ENCODE measurements at regions of chr2 and their contacts with region 1.

Region 1: DNA sequence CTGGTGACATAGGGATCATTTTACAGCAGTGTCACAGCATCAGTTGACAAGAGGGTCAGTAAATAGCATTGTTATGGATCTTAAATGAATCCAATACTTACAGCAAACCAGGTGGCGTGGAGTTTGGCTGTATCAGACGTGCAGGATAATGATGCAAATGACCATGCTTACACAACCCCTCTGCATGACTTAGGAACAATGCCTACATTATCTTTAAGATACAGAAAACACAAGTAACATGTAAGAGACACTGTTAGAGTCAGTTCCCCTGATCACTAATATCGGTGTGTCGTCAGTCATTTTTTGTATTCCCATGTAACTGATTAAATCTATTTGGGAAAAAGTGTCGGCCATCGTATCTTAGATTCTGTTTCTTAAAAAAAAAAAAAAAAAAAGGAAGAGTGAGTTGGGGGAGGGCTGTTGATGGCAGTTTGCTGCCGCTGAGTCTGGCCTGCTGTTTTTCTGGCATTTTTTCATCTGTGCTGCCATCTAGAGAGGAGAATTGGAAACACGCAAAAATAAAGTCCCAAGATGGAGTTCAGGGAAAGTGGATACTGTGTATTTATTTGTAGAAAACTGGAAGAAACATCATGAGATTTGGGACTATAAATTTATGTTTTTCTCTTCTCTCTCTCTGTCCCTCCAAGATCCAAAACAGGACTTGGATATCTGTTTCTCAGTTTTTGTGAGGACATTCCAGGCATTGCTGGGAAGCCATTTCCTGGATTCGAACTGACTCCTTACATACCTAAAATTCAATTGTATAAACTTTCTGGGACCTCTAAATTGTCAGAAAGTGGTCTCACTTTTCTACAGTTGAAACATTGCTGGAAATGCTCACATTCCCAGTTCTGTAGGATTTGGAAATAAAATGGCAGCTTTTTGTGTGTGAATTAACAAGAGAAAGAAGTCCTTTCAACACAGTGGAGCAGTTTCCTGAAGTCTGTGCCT is 60.3 kb upstream of the AGPS start:
- DNase-seq: peak; percentile 82
- ATAC-seq: peak; percentile 85
- H3K4me3 ChIP-seq: no peak overlapping the region
- H3K4me3 Mint-ChIP-seq: no peak overlapping the region
- H3K27ac ChIP-seq: no peak overlapping the region
- H3K27ac Mint-ChIP-seq: no peak overlapping the region
- H3K4me1 ChIP-seq: peaks cover 4 to 5% of the 10 kb centered on the region in 2 donors
- H3K4me1 Mint-ChIP-seq: peaks cover 8% of the 10 kb centered on the region
- H3K27me3 ChIP-seq: no peaks in the 10 kb centered on the region
- H3K27me3 Mint-ChIP-seq: no peaks in the 10 kb centered on the region
- CTCF ChIP-seq: peak; percentile 77

Region 2: GRCh38 chr2:177148477-177149154 is 183.7 kb before region 1 on chr2:
- CTCF ChIA-PET with region 1: interaction called, 7 read pairs
- POLR2A ChIA-PET with region 1: no interaction called
- intact Hi-C with region 1: loop called (anchors 1 kb)
- DNase-seq: peak; percentile 85
- ATAC-seq: peak; percentile 92
- H3K4me3 ChIP-seq: peak overlapping the region; percentile 42 to 94 (median 67)
- H3K4me3 Mint-ChIP-seq: peak overlapping the region; percentile 92
- H3K27ac ChIP-seq: no peak overlapping the region
- H3K27ac Mint-ChIP-seq: peak overlapping the region; percentile 2
- H3K4me1 ChIP-seq: peaks cover 9 to 13% of the 10 kb centered on the region in 2 donors
- H3K4me1 Mint-ChIP-seq: peaks cover 11% of the 10 kb centered on the region
- H3K27me3 ChIP-seq: peaks cover 0 to 13% (median 10%) of the 10 kb centered on the region in 4 experiments
- H3K27me3 Mint-ChIP-seq: peaks cover 36% of the 10 kb centered on the region
- CTCF ChIP-seq: peak; percentile 99

Region 3: GRCh38 chr2:177296040-177296439 is 36.3 kb before region 1 on chr2:
- CTCF ChIA-PET with region 1: interaction called, 5 read pairs
- POLR2A ChIA-PET with region 1: no interaction called
- intact Hi-C with region 1: loop called (anchors 5 kb)
- DNase-seq: peak; percentile 66
- ATAC-seq: peak; percentile 45
- H3K4me3 ChIP-seq: no peak overlapping the region
- H3K4me3 Mint-ChIP-seq: no peak overlapping the region
- H3K27ac ChIP-seq: no peak overlapping the region
- H3K27ac Mint-ChIP-seq: no peak overlapping the region
- H3K4me1 ChIP-seq: peaks cover 0 to 2% of the 10 kb centered on the region in 2 donors
- H3K4me1 Mint-ChIP-seq: peaks cover 4% of the 10 kb centered on the region
- H3K27me3 ChIP-seq: no peaks in the 10 kb centered on the region
- H3K27me3 Mint-ChIP-seq: no peaks in the 10 kb centered on the region
- CTCF ChIP-seq: peak; percentile 69

Region 4: GRCh38 chr2:177353187-177353478 is 20.8 kb after region 1 on chr2:
- CTCF ChIA-PET with region 1: interaction called, 14 read pairs
- POLR2A ChIA-PET with region 1: no interaction called
- intact Hi-C with region 1: no loop called
- DNase-seq: no peak
- ATAC-seq: no peak
- H3K4me3 ChIP-seq: no peak overlapping the region
- H3K4me3 Mint-ChIP-seq: no peak overlapping the region
- H3K27ac ChIP-seq: no peak overlapping the region
- H3K27ac Mint-ChIP-seq: no peak overlapping the region
- H3K4me1 ChIP-seq: no peaks in the 10 kb centered on the region
- H3K4me1 Mint-ChIP-seq: peaks cover 13% of the 10 kb centered on the region
- H3K27me3 ChIP-seq: no peaks in the 10 kb centered on the region
- H3K27me3 Mint-ChIP-seq: peaks cover 4% of the 10 kb centered on the region
- CTCF ChIP-seq: no peak

Region 5: DNA sequence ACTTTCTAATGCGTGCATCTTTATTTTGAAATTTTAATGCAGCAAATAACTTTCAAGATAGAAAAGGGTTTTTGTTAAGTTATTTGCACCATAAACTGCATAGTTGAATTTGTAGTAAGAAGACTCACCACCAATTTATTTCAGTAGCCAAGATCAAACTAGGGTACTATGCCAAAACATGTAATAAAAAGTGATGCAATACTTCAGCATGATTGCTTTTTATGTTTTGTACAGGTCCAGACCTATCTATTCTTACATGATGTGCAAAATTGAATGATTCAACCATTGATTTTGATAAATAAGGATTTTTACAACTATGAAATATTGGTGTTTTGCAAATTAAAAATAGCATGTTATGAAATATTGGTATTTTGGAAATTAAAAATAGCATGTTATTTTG is 87.0 kb after region 1 on chr2:
- CTCF ChIA-PET with region 1: interaction called, 121 read pairs
- POLR2A ChIA-PET with region 1: no interaction called
- intact Hi-C with region 1: loop called (anchors 1 kb)
- DNase-seq: no peak
- ATAC-seq: no peak
- H3K4me3 ChIP-seq: no peak overlapping the region
- H3K4me3 Mint-ChIP-seq: no peak overlapping the region
- H3K27ac ChIP-seq: no peak overlapping the region
- H3K27ac Mint-ChIP-seq: no peak overlapping the region
- H3K4me1 ChIP-seq: no peaks in the 10 kb centered on the region
- H3K4me1 Mint-ChIP-seq: peaks cover 2% of the 10 kb centered on the region
- H3K27me3 ChIP-seq: no peaks in the 10 kb centered on the region
- H3K27me3 Mint-ChIP-seq: no peaks in the 10 kb centered on the region
- CTCF ChIP-seq: no peak

Region 6: GRCh38 chr2:177552422-177553175 is 220.3 kb after region 1 on chr2:
- CTCF ChIA-PET with region 1: interaction called, 3 read pairs
- POLR2A ChIA-PET with region 1: no interaction called
- intact Hi-C with region 1: loop called (anchors 5 kb)
- DNase-seq: peak; percentile 98
- ATAC-seq: peak; percentile 92
- H3K4me3 ChIP-seq: peak overlapping the region; percentile 63 to 98 (median 94)
- H3K4me3 Mint-ChIP-seq: peak overlapping the region; percentile 97
- H3K27ac ChIP-seq: peak overlapping the region; percentile 99 to 100
- H3K27ac Mint-ChIP-seq: peak overlapping the region; percentile 100
- H3K4me1 ChIP-seq: peaks cover 9 to 13% of the 10 kb centered on the region in 2 donors
- H3K4me1 Mint-ChIP-seq: peaks cover 19% of the 10 kb centered on the region
- H3K27me3 ChIP-seq: no peaks in the 10 kb centered on the region
- H3K27me3 Mint-ChIP-seq: no peaks in the 10 kb centered on the region
- CTCF ChIP-seq: no peak

Region 7: GRCh38 chr2:177724398-177725287 is 392.3 kb after region 1 on chr2:
- CTCF ChIA-PET with region 1: interaction called, 83 read pairs
- POLR2A ChIA-PET with region 1: no interaction called
- intact Hi-C with region 1: loop called (anchors 1 kb)
- DNase-seq: peak; percentile 42
- ATAC-seq: peak; percentile 51
- H3K4me3 ChIP-seq: no peak overlapping the region
- H3K4me3 Mint-ChIP-seq: no peak overlapping the region
- H3K27ac ChIP-seq: no peak overlapping the region
- H3K27ac Mint-ChIP-seq: no peak overlapping the region
- H3K4me1 ChIP-seq: no peaks in the 10 kb centered on the region
- H3K4me1 Mint-ChIP-seq: no peaks in the 10 kb centered on the region
- H3K27me3 ChIP-seq: peaks cover 0 to 3% (median 0%) of the 10 kb centered on the region in 4 experiments
- H3K27me3 Mint-ChIP-seq: peaks cover 38% of the 10 kb centered on the region
- CTCF ChIP-seq: peak; percentile 87

Measured in B cell (primary cell).